ENCODE measurements at regions of chr5 and their contacts with region 1.

Region 1: DNA sequence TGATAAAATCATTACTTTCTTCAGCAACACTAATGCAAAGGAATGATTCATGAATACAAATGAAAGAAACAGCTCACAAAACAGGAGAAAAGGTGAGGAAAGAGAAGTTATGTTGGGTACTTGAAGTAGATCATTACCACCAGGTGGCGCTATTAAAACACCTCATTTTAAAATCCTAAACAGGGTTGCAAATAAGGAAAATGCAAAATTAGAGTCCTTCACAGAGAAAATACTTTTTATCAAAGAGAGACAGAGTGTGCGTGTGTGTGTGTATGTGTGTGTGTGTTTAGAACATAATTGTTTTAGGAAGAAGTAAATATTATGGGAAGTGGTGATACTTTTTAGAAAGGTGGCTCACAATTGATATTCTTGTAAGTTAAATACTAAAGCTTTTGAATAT is 49.5 kb upstream of the CD180 start:
- DNase-seq: no peak
- ATAC-seq: peak; percentile 44 to 61

Region 2: GRCh38 chr5:67652201-67652600 is 406.1 kb after region 1 on chr5:
- intact Hi-C with region 1: loop called in 1 of 2 experiments (anchors 10 kb)
- DNase-seq: no peak
- ATAC-seq: no peak

Region 3: GRCh38 chr5:68460147-68460798 is 1214.2 kb after region 1 on chr5:
- intact Hi-C with region 1: loop called in 1 of 2 experiments (anchors 5 kb)
- DNase-seq: no peak
- ATAC-seq: peak; percentile 54 to 60